ENCODE measurements at regions of chrX and their contacts with region 1.

Region 1: GRCh38 chrX:47233337-47234113 is 716 bp downstream of the USP11 start:
- DNase-seq: peak; percentile 81 to 97 (median 95)
- ATAC-seq: peak; percentile 87 to 91 (median 90)
- H3K4me3 ChIP-seq: peak overlapping the region; percentile 73 to 95
- H3K4me3 Mint-ChIP-seq: peak overlapping the region; percentile 92 to 96 (median 94)
- H3K27ac ChIP-seq: peak overlapping the region; percentile 99
- H3K27ac Mint-ChIP-seq: peak overlapping the region; percentile 99
- H3K4me1 ChIP-seq: peaks cover 2 to 17% of the 10 kb centered on the region in 2 experiments
- H3K4me1 Mint-ChIP-seq: peaks cover 29 to 34% (median 32%) of the 10 kb centered on the region in 3 donors
- H3K27me3 ChIP-seq: no peaks in the 10 kb centered on the region
- H3K27me3 Mint-ChIP-seq: no peaks in the 10 kb centered on the region

Region 2: GRCh38 chrX:47012131-47012530 is 221.4 kb before region 1 on chrX:
- CTCF ChIA-PET with region 1: no interaction called
- POLR2A ChIA-PET with region 1: interaction called in 1 of 2 experiments, 10 read pairs
- DNase-seq: no peak
- ATAC-seq: no peak
- H3K4me3 ChIP-seq: no peak overlapping the region
- H3K4me3 Mint-ChIP-seq: no peak overlapping the region
- H3K27ac ChIP-seq: no peak overlapping the region
- H3K27ac Mint-ChIP-seq: no peak overlapping the region
- H3K4me1 ChIP-seq: no peaks in the 10 kb centered on the region
- H3K4me1 Mint-ChIP-seq: no peaks in the 10 kb centered on the region
- H3K27me3 ChIP-seq: no peaks in the 10 kb centered on the region
- H3K27me3 Mint-ChIP-seq: peaks cover 0 to 9% of the 10 kb centered on the region in 2 donors

Region 3: GRCh38 chrX:47185241-47185640 is 48.3 kb before region 1 on chrX:
- CTCF ChIA-PET with region 1: no interaction called
- POLR2A ChIA-PET with region 1: interaction called, 7 to 12 read pairs
- DNase-seq: no peak
- ATAC-seq: no peak
- H3K4me3 ChIP-seq: no peak overlapping the region
- H3K4me3 Mint-ChIP-seq: no peak overlapping the region
- H3K27ac ChIP-seq: no peak overlapping the region
- H3K27ac Mint-ChIP-seq: no peak overlapping the region
- H3K4me1 ChIP-seq: peaks cover 0 to under 1% of the 10 kb centered on the region in 2 experiments
- H3K4me1 Mint-ChIP-seq: peaks cover 0 to under 1% (median under 1%) of the 10 kb centered on the region in 3 donors
- H3K27me3 ChIP-seq: no peaks in the 10 kb centered on the region
- H3K27me3 Mint-ChIP-seq: peaks cover 0 to 10% of the 10 kb centered on the region in 2 donors

Region 4: DNA sequence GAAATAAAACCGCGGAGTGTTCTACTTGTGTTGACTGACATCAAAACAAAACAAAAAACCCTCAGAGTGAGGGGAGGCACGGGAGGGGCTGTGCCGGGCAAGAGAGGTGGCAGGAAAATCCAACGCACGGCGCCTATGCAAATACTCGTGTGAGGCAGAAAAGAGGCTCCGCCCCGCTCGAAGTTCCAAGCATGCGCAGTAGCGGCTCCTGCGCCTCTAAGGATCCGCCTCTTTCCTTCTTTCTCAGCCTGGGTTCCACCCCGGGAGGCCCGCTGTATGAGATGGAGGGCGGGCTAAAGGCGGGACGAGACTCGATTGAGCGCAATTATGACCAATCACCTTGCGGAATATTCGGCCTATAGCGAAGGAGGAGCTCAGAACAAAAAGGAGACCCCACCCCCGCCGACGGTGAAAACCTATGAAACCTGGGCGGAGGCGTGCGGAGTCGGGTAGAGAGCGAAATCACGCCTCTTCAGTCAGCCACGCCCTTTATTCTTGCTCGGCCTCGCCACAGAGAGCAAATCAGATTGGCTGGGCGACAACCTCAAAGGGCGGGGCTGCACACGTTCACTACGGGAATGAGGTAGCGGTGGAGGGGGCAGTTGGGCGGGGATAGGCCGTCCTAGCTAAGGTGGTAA is 15.8 kb before region 1 on chrX:
- CTCF ChIA-PET with region 1: interaction called in 1 of 2 experiments, 3 read pairs
- POLR2A ChIA-PET with region 1: interaction called, 4 to 19 read pairs
- DNase-seq: peak; percentile 88 to 100 (median 96)
- ATAC-seq: peak; percentile 80 to 82 (median 81)
- H3K4me3 ChIP-seq: peak overlapping the region; percentile 74 to 93
- H3K4me3 Mint-ChIP-seq: peak overlapping the region; percentile 87 to 95 (median 93)
- H3K27ac ChIP-seq: peak overlapping the region; percentile 98
- H3K27ac Mint-ChIP-seq: peak overlapping the region; percentile 98 to 99
- H3K4me1 ChIP-seq: peaks cover 3 to 35% of the 10 kb centered on the region in 2 experiments
- H3K4me1 Mint-ChIP-seq: peaks cover 41 to 48% (median 42%) of the 10 kb centered on the region in 3 donors
- H3K27me3 ChIP-seq: no peaks in the 10 kb centered on the region
- H3K27me3 Mint-ChIP-seq: no peaks in the 10 kb centered on the region